Activated CD4-positive, alpha-beta T cell treated with anti-CD3 and anti-CD28 coated beads, Interleukin-2, amount 10 ng/mL, durations not matched to agents 24 days and 14 days (primary cell): ENCODE measurements at regions of chr2 and their contacts with region 1.

Region 1: DNA sequence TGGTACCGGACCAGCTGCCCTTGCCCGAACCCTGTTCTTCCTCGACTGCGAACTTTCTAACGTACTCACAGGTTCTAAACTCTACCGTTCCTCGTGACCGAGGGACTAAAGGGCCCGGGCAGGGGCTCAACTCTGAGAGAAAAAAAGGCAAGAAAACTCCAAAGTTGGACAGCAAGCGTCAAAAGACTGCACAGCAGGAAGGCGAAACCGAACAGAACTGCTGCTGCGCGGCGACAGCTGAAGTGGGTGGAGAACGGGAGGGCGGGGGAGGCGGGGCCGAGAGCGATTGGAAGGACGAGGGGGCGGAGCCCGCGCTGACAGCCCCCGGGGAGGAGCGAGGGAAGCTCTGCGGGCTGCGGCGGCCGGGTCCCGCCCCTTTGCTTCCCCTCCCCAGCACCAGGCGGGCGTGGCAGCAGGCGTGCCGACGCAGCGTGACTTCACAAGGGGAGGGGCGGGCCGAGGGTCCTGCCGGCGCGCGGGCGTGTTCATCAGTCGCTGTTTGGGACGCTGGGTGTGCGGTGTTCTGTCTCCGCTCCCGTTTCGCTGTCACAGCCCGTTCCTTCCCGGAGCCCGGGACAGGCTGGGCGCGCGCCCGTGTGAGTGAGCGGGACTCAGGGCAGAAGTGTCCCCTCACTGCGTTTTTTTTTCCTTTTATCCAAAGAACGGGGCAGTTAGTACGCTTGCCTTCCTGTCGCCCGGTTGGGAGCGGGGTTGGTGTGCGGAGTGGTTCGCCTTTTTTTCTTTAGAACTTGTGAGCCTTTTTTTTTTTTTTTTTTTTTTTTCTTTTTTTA is at the start of gene NABP1:
- DNase-seq: peak; percentile 100
- H3K4me3 Mint-ChIP-seq: peak within 1 kb of the TSS; percentile 99
- H3K27ac Mint-ChIP-seq: peak within 1 kb of the TSS; percentile 100
- H3K4me1 Mint-ChIP-seq: peaks cover 47% of the 10 kb centered on the region
- H3K27me3 Mint-ChIP-seq: no peaks in the 10 kb centered on the region
- total RNA-seq, gene NABP1: 50.7 and 53.1 TPM in 2 replicates

Region 2: GRCh38 chr2:191020221-191020741 is 657.6 kb before region 1 on chr2:
- intact Hi-C with region 1: loop called (anchors 2 kb)
- DNase-seq: peak; percentile 99
- H3K4me3 Mint-ChIP-seq: no peak overlapping the region
- H3K27ac Mint-ChIP-seq: no peak overlapping the region
- H3K4me1 Mint-ChIP-seq: peaks cover 31% of the 10 kb centered on the region
- H3K27me3 Mint-ChIP-seq: peaks cover 2% of the 10 kb centered on the region

Region 3: DNA sequence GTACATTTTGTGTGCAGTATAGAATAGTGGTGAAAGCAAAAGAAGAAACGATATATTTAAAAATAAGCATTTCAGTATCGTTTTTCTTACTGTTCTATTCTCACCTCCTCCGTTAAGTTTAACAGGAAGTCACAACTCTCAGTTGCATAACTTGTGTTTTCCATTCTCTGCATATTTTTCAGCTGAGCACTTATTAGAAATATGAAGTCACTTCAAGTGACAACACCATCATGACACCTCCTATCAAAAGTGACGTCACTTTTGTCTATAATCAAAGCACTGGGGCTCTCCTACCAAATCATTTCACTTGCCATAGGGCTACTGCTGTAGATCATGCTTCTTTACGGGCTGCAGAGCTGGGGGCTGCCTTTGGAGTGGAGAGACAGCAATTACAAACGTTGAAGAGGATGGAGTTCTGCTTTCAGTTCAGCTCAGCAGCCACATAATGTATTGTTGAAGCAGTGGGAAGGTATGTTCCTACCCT is 563.4 kb before region 1 on chr2:
- intact Hi-C with region 1: loop called (anchors 5 kb)
- DNase-seq: peak; percentile 82
- H3K4me3 Mint-ChIP-seq: peak overlapping the region; percentile 60
- H3K27ac Mint-ChIP-seq: peak overlapping the region; percentile 92
- H3K4me1 Mint-ChIP-seq: peaks cover 55% of the 10 kb centered on the region
- H3K27me3 Mint-ChIP-seq: no peaks in the 10 kb centered on the region

Region 4: GRCh38 chr2:191189112-191189635 is 488.7 kb before region 1 on chr2:
- intact Hi-C with region 1: loop called (anchors 5 kb)
- DNase-seq: peak; percentile 56
- H3K4me3 Mint-ChIP-seq: peak overlapping the region; percentile 62
- H3K27ac Mint-ChIP-seq: peak overlapping the region; percentile 41
- H3K4me1 Mint-ChIP-seq: peaks cover 39% of the 10 kb centered on the region
- H3K27me3 Mint-ChIP-seq: no peaks in the 10 kb centered on the region

Region 5: DNA sequence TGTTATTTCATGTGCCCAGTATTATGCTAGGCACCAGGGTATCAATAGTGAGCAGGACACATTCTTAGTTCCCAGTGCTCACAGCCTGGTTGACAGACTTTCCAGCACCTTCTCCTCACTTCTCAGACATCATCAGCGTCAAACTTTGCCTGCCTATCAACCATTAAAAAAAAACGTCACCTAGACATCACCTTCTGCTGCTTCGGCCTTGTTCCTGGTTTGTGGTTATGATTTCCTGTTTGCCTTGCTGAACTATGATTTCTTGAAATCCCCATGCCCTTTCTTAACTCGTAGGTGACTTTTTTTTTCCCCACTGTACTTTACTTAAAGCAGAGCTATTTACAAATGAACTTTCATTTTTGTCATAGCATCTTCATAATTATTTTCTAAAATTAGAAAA is 60.3 kb before region 1 on chr2:
- intact Hi-C with region 1: loop called (anchors 1 kb)
- DNase-seq: peak; percentile 89
- H3K4me3 Mint-ChIP-seq: peak overlapping the region; percentile 55
- H3K27ac Mint-ChIP-seq: peak overlapping the region; percentile 85
- H3K4me1 Mint-ChIP-seq: peaks cover 48% of the 10 kb centered on the region
- H3K27me3 Mint-ChIP-seq: no peaks in the 10 kb centered on the region

Region 6: GRCh38 chr2:191666732-191667131 is 11.1 kb before region 1 on chr2:
- intact Hi-C with region 1: loop called (anchors 1 kb)
- DNase-seq: no peak
- H3K4me3 Mint-ChIP-seq: no peak overlapping the region
- H3K27ac Mint-ChIP-seq: peak overlapping the region; percentile 46
- H3K4me1 Mint-ChIP-seq: peaks cover 21% of the 10 kb centered on the region
- H3K27me3 Mint-ChIP-seq: no peaks in the 10 kb centered on the region

Region 7: DNA sequence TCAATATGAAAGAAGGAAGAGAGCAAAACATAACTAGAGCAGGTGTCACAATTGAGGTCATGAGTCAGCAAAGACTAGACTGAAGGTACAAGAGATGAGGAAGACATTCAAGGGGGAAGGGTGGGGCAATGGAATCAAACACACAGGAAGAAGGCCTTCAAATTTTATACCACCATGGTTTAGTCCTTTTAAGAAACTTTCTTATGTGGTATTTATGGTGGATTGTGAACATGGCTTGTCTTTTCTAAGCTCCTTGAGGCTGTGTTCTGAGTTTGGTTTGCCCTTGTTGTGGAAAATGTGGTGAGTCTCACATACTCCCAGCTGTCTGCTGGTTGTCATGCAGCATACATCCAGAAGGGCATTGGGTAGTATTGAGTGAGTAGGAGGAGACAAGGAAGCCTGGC is 62.2 kb after region 1 on chr2:
- intact Hi-C with region 1: loop called (anchors 2 kb)
- DNase-seq: peak; percentile 91
- H3K4me3 Mint-ChIP-seq: peak overlapping the region; percentile 16
- H3K27ac Mint-ChIP-seq: peak overlapping the region; percentile 82
- H3K4me1 Mint-ChIP-seq: peaks cover 13% of the 10 kb centered on the region
- H3K27me3 Mint-ChIP-seq: peaks cover 30% of the 10 kb centered on the region